Esophagus muscularis mucosa (tissue), 4 donors: ENCODE measurements at regions of chr7 and their contacts with region 1.

Region 1: GRCh38 chr7:41696314-41696916 is 6.5 kb downstream of the INHBA start:
- DNase-seq: peak; percentile 64
- H3K4me3 ChIP-seq: peak overlapping the region; percentile 59 to 70 (median 64)
- H3K27ac ChIP-seq: peak overlapping the region; percentile 83 to 94 (median 88)
- H3K4me1 ChIP-seq: peaks cover 36 to 70% (median 57%) of the 10 kb centered on the region in 4 donors
- H3K27me3 ChIP-seq: no peaks in the 10 kb centered on the region
- CTCF ChIP-seq: peak; percentile 67 to 78 (median 75)
- EP300 ChIP-seq: no peak
- POLR2A ChIP-seq: no peak

Region 2: GRCh38 chr7:40899651-40900507 is 796.5 kb before region 1 on chr7:
- intact Hi-C with region 1: loop called (anchors 10 kb)
- DNase-seq: no peak
- H3K4me3 ChIP-seq: peak overlapping the region; percentile 21 to 53 (median 28)
- H3K27ac ChIP-seq: peak overlapping the region; percentile 66 to 85 (median 72)
- H3K4me1 ChIP-seq: peaks cover 0 to 13% (median 4%) of the 10 kb centered on the region in 4 donors
- H3K27me3 ChIP-seq: no peaks in the 10 kb centered on the region
- CTCF ChIP-seq: no peak
- EP300 ChIP-seq: no peak
- POLR2A ChIP-seq: no peak

Region 3: GRCh38 chr7:40996233-40996677 is 700.2 kb before region 1 on chr7:
- intact Hi-C with region 1: loop called (anchors 10 kb)
- DNase-seq: no peak
- H3K4me3 ChIP-seq: no peak overlapping the region
- H3K27ac ChIP-seq: no peak overlapping the region
- H3K4me1 ChIP-seq: peaks cover 0 to 19% (median 14%) of the 10 kb centered on the region in 4 donors
- H3K27me3 ChIP-seq: no peaks in the 10 kb centered on the region
- CTCF ChIP-seq: no peak
- EP300 ChIP-seq: no peak
- POLR2A ChIP-seq: no peak